ENCODE measurements at regions of chr9 and their contacts with region 1.

Region 1: DNA sequence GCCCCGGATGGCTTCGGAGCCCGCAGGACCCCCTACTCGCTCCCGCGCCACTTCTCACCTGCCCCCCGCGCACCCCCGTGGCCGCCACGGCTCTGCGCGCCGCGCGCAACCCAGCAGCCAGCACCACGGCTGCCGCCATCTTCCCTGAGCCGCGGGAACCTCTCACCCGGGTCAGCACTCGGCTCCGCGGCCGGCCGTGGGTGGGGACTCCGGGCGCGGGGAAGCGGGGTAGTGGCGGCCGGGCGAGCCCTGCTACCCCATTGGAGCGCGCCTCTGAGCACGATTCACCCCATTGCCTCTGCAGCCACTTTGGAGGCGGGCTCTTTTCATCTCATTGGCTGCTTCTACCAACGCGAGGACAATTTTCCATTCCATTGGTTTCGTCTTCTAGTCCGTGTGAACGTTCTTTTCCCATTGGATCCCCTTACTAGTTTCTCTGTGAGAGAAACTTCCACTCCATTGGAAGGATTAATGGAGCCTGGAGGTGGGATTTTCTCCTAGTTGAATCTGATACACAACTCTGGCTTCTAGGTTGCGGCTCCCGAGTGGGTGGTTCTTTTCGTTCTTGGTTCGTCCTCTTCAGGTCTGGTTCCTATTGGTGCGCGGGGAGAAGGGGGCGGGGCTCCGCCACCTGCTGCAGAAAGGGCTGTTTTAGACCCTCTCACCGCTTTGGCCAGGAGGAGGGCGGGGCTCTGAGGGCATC is at the start of gene HINT2:
- DNase-seq: peak; percentile 99
- H3K4me3 Mint-ChIP-seq: peak within 1 kb of the TSS; percentile 96
- H3K27ac Mint-ChIP-seq: peak within 1 kb of the TSS; percentile 93
- H3K4me1 Mint-ChIP-seq: peaks cover 33% of the 10 kb centered on the region
- H3K27me3 Mint-ChIP-seq: no peaks in the 10 kb centered on the region
- total RNA-seq, gene HINT2: 67.8 to 72.6 TPM

Region 2: GRCh38 chr9:35657546-35658136 is 157.4 kb before region 1 on chr9 and contains the start of gene RMRP:
- CTCF ChIA-PET with region 1: interaction called, 4 read pairs
- POLR2A ChIA-PET with region 1: no interaction called
- intact Hi-C with region 1: loop called (anchors 2 kb)
- DNase-seq: peak; percentile 96
- H3K4me3 Mint-ChIP-seq: peak within 1 kb of the TSS; percentile 86
- H3K27ac Mint-ChIP-seq: peak within 1 kb of the TSS; percentile 96
- H3K4me1 Mint-ChIP-seq: peaks cover 64% of the 10 kb centered on the region
- H3K27me3 Mint-ChIP-seq: peaks cover 2% of the 10 kb centered on the region
- total RNA-seq, gene RMRP: 10,694 to 13,592 TPM

Region 3: GRCh38 chr9:35748858-35749514 is 66.0 kb before region 1 on chr9 and contains the starts of genes GBA2 and RGP1:
- CTCF ChIA-PET with region 1: no interaction called
- POLR2A ChIA-PET with region 1: no interaction called
- intact Hi-C with region 1: no loop called
- DNase-seq: peak; percentile 82
- H3K4me3 Mint-ChIP-seq: peak within 1 kb of the TSS; percentile 93
- H3K27ac Mint-ChIP-seq: peak within 1 kb of the TSS; percentile 88
- H3K4me1 Mint-ChIP-seq: peaks cover 37% of the 10 kb centered on the region
- H3K27me3 Mint-ChIP-seq: no peaks in the 10 kb centered on the region
- total RNA-seq, gene GBA2: 30.4 to 30.7 TPM
- total RNA-seq, gene RGP1: 17.4 to 18.0 TPM

Region 4: DNA sequence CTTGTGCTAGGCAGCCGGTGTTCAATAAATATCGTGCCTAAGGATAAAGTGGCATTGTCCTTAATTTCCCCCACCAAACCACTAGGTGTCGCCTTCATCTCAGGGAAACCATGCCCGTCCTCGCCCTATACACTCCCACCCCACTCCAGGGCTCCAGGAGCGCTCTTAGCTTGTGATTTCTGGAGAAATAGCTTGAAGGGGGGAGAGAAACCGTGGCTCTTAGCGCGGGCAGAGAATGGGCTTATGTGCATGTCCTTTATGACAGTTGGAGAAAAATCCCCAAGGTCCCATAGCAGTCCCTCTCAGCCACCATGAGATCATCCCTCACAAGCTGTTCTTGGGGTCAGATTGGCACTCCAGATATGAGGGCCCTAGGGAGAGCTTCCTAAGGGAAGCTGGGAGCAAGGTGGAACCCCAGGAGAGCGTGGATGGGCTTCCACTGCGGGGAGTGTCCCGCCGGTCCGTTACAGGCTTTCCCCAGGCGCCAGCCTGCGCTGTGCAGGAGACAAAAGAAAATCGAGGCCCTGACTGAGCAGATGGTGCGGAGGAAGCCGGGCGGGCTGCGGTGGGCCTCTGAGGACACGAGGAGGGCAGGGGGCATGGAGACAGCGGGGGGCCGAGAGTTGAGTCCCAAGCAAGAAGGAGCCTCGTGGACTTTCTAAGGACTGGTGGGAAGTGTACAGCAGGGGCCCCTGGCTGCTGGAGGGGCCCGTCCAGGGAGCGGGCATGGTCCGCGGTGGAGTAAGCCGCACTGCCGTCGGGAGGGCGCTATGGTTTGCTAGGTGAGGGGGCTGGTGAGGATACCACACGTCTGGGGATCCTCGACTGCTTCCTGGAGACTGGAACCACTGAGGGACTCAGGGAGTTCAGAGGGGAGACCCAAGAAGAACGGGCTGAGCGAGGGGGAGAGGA is 24.4 kb before region 1 on chr9:
- CTCF ChIA-PET with region 1: interaction called, 35 read pairs
- POLR2A ChIA-PET with region 1: no interaction called
- intact Hi-C with region 1: no loop called
- DNase-seq: peak; percentile 60
- H3K4me3 Mint-ChIP-seq: no peak overlapping the region
- H3K27ac Mint-ChIP-seq: no peak overlapping the region
- H3K4me1 Mint-ChIP-seq: peaks cover 5% of the 10 kb centered on the region
- H3K27me3 Mint-ChIP-seq: no peaks in the 10 kb centered on the region

Region 5: GRCh38 chr9:35829084-35829763 is 14.2 kb after region 1 on chr9 and contains the start of gene TMEM8B:
- CTCF ChIA-PET with region 1: interaction called, 34 read pairs
- POLR2A ChIA-PET with region 1: interaction called, 7 read pairs
- intact Hi-C with region 1: loop called (anchors 1 kb)
- DNase-seq: peak; percentile 96
- H3K4me3 Mint-ChIP-seq: peak within 1 kb of the TSS; percentile 91
- H3K27ac Mint-ChIP-seq: peak within 1 kb of the TSS; percentile 60
- H3K4me1 Mint-ChIP-seq: peaks cover 23% of the 10 kb centered on the region
- H3K27me3 Mint-ChIP-seq: no peaks in the 10 kb centered on the region
- total RNA-seq, gene TMEM8B: 5.9 to 6.0 TPM